PC-9 (cell line): ENCODE measurements at regions of chr11 and their contacts with region 1.

Region 1: GRCh38 chr11:107496011-107496410 is 38.4 kb upstream of the CWF19L2 start:
- DNase-seq: peak in 1 of 2 experiments; percentile 3
- H3K4me3 ChIP-seq: no peak overlapping the region
- H3K27ac ChIP-seq: no peak overlapping the region
- H3K4me1 ChIP-seq: peaks cover 17% of the 10 kb centered on the region
- H3K27me3 ChIP-seq: no peaks in the 10 kb centered on the region
- CTCF ChIP-seq: no peak

Region 2: GRCh38 chr11:107590460-107591377 is 94.7 kb after region 1 on chr11 and contains the start of gene ELMOD1:
- CTCF ChIA-PET with region 1: interaction called, 21 read pairs
- POLR2A ChIA-PET with region 1: no interaction called
- intact Hi-C with region 1: no loop called
- DNase-seq: peak in 1 of 2 experiments; percentile 36
- H3K4me3 ChIP-seq: peak within 1 kb of the TSS; percentile 59
- H3K27ac ChIP-seq: no peak within 1 kb of the TSS
- H3K4me1 ChIP-seq: no peaks in the 10 kb centered on the region
- H3K27me3 ChIP-seq: peaks cover 11% of the 10 kb centered on the region; the same call in 1 of the 2 replicates
- CTCF ChIP-seq: no peak
- total RNA-seq, gene ELMOD1: not detected in 2 replicates